Head of caudate nucleus (tissue), 42 donors: ENCODE measurements at regions of chr4 and their contacts with region 1.

Region 1: DNA sequence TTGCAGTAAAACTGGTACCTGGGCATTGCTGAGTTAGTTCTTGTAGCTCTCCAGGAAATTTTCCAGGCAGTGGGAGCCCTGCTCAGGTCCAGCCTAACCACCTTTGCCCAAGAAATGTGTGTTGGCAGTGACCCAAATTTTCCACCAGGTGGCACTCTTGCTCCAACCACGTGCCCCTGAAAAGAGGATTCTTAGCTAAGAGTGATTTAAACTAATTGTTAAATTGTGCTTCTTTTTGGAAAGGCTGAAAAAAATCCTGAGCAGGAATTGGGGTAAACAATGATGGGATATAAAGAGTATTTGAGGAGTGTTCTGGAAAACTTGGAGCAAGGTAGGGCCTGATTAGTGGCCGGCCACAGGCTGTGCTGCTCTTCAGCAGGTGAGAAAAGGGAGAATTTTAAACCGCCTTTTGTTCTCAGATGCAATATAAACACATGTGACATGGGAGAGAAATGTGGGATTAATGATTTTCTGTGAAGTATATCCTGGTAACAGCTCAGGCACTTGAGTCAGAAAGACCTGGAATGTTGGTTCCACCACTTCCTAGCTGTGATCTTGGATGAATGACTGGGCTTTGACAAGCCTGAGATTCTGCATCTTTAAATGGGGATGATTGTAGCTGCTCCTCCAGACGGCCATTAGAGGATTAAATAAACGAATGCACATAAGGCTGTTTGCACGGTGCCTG is 219.6 kb downstream of the PTTG2 start:
- DNase-seq: peak; percentile 58 to 94 (median 84)

Region 2: GRCh38 chr4:38078590-38079421 is 101.0 kb before region 1 on chr4:
- intact Hi-C with region 1: loop called (anchors 10 kb)
- DNase-seq: no peak

Region 3: GRCh38 chr4:38308728-38309311 is 129.0 kb after region 1 on chr4:
- intact Hi-C with region 1: no loop called
- DNase-seq: peak in 2 of 42 donors; percentile 38 to 42

Region 4: DNA sequence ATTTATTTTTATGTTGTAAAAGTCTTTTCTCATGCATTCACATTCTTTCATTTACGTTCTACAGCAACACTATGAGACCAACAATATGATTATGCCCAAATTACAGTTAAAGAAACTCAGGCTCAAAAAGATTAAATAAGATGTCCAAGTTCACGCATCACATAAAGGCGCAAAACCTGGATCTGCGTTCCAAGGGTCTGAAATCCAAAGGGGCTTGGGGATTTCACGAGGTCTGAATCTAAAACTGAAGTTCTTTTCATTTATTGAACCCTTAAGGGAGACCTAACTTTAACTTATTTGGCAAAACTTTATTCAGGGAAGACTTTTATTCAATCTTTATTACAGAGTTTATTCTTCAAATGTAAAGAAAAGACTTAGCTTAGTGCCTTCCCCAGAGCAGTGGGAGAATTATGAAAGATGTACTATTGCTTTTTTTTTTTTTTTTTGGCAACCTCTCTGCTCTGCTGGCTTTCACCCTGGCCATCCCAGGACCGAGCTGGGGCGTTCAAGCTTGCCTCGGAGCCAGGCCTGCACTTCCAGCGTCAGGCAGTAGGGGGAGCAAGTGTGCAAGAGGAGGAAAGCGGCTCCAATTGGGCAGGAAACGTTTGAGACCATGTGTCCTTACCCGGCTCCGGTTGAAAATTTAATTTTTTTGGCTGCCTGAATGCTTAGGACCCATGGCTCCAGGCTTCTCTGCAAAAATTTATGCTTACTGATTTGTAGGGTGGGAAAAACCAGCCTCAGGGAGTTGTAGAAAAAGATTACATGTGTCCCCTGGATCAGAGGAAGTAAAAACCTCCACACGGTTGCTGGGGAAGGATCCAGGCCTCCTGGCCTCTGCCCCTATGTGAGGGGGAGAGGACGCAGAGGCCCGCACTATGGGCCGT is 139.9 kb after region 1 on chr4:
- intact Hi-C with region 1: loop called (anchors 5 kb)
- DNase-seq: peak; percentile 68 to 98 (median 93)

Region 5: GRCh38 chr4:38675146-38676121 is 495.6 kb after region 1 on chr4:
- intact Hi-C with region 1: loop called (anchors 5 kb)
- DNase-seq: peak; percentile 37 to 96 (median 85)

Region 6: GRCh38 chr4:38730830-38731646 is 551.2 kb after region 1 on chr4:
- intact Hi-C with region 1: loop called (anchors 5 kb)
- DNase-seq: peak; percentile 28 to 94 (median 84)